ENCODE measurements at regions of chr10 and their contacts with region 1.

Region 1: DNA sequence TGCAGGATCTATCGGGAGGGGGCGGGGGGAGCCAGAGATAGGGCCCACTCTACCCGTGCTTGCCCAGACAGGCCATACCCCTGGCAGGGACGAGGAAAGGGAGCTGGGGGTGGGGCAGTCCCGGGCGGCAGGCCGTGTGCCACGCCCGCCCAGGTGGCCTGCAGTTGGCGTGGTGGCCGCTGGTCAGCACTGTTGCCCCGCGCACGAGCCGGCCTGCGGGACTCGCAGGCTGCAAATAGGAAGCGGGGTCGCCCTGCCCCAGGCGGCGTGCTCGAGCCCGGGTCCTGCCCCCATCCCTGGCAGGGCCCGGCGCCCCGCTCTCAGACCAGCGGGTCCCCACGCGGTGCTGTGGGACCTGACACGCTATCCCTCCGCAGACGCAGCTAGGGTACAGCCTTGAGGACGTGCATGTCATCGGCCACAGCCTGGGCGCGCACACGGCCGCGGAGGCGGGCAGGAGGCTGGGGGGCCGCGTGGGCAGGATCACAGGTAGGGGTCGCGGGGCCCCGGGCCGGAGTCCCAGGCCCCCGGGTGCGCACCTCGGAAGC is 6.7 kb downstream of the PNLIPRP2 start:
- DNase-seq: peak; percentile 31 to 67
- H3K4me3 ChIP-seq: peak overlapping the region; percentile 44 to 75 (median 50)
- H3K27ac ChIP-seq: no peak overlapping the region
- H3K4me1 ChIP-seq: no peaks in the 10 kb centered on the region
- H3K27me3 ChIP-seq: peaks cover 0 to 4% (median 0%) of the 10 kb centered on the region in 4 experiments; a peak in 3 of 7 replicates
- CTCF ChIP-seq: peak; percentile 70 to 93 (median 92)
- EP300 ChIP-seq: no peak
- POLR2A ChIP-seq: no peak
- RAD21 ChIP-seq: peak; percentile 80 to 90

Region 2: GRCh38 chr10:116615199-116615776 is 12.2 kb before region 1 on chr10:
- CTCF ChIA-PET with region 1: interaction called, 13 read pairs
- POLR2A ChIA-PET with region 1: interaction called, 3 read pairs
- DNase-seq: no peak
- H3K4me3 ChIP-seq: no peak overlapping the region
- H3K27ac ChIP-seq: no peak overlapping the region
- H3K4me1 ChIP-seq: no peaks in the 10 kb centered on the region; a peak in 1 of 7 replicates
- H3K27me3 ChIP-seq: peaks cover 0 to 2% (median 0%) of the 10 kb centered on the region in 4 experiments; a peak in 2 of 7 replicates
- CTCF ChIP-seq: no peak
- EP300 ChIP-seq: no peak
- POLR2A ChIP-seq: no peak
- RAD21 ChIP-seq: no peak

Region 3: DNA sequence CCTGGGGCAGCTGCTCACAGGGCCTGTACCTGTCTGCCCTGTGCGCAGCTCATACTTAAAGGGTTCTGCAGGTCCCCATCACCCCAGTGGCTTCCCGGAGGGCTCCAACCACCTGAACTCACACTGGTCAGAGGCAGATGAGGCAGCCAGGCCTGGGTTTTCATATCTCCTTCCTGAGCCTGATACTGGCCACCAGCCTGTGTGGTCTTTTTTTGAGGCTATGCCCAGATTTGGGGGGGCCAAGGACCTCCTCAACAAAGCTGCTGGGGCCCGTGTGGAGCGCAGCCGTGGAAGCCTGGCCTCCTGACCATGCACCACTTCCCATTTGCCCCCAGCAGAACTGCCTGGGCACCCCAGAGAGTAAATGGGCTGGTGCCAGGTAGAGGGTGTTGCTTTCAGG is 19.0 kb after region 1 on chr10:
- CTCF ChIA-PET with region 1: interaction called, 19 read pairs
- POLR2A ChIA-PET with region 1: no interaction called
- DNase-seq: no peak
- H3K4me3 ChIP-seq: no peak overlapping the region
- H3K27ac ChIP-seq: no peak overlapping the region
- H3K4me1 ChIP-seq: no peaks in the 10 kb centered on the region
- H3K27me3 ChIP-seq: no peaks in the 10 kb centered on the region
- CTCF ChIP-seq: no peak
- EP300 ChIP-seq: no peak
- POLR2A ChIP-seq: no peak
- RAD21 ChIP-seq: no peak

Region 4: DNA sequence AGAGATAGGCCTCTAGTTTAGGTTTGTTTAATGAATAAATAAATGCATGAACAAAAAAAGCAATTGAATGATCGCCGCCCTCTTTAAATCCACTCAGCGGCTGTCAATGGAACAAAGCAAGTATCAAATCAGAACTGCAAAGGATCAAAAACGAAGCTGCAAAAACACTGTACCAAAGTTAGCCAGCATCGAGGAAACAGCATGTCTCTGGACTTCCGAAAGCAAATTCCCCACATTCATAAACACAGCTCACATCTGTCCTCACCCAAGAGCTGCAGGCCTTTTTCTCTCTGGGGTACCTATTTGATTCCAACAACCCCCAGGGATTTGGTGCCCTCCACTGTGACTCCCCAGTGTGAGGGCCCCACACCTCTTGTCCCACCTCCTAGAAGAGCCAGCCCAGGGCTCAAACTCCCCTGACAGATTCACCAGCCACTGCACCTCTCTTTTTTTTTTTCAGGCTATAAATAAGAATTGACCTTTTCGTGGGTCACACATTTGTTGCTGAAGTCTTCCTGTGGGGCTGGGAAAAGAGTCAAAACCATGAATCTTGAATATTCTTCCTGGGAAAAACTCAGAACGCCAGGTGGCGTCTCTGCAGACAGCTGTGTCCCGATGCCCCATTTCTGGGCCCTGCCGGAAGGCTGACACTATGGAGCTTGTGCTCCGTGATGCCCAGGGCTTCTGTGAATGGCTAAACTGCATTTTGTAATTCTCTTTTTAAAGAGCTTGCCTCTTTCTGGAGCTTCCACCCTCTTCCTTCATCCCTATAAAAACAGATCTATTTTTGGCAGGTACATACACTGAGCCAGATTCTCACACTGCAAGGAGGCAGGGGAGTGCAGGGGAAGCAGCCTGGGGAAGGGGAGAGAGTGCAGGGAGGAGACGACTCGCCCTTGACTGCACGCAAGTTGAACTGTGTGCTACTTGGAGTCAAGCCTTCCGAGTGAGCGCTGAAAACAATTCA is 63.2 kb after region 1 on chr10:
- CTCF ChIA-PET with region 1: interaction called, 16 read pairs
- POLR2A ChIA-PET with region 1: no interaction called
- DNase-seq: peak in 1 of 2 experiments; percentile 57
- H3K4me3 ChIP-seq: peak overlapping the region in 3 of 4 experiments; percentile 19 to 33 (median 21); a peak in 2 of 8 replicates
- H3K27ac ChIP-seq: no peak overlapping the region
- H3K4me1 ChIP-seq: peaks cover 4 to 17% (median 8%) of the 10 kb centered on the region in 4 experiments; a peak in 6 of 7 replicates
- H3K27me3 ChIP-seq: no peaks in the 10 kb centered on the region; a peak in 3 of 7 replicates
- CTCF ChIP-seq: peak; percentile 45 to 62 (median 46)
- EP300 ChIP-seq: no peak
- POLR2A ChIP-seq: no peak
- RAD21 ChIP-seq: peak; percentile 49 to 60

Region 5: DNA sequence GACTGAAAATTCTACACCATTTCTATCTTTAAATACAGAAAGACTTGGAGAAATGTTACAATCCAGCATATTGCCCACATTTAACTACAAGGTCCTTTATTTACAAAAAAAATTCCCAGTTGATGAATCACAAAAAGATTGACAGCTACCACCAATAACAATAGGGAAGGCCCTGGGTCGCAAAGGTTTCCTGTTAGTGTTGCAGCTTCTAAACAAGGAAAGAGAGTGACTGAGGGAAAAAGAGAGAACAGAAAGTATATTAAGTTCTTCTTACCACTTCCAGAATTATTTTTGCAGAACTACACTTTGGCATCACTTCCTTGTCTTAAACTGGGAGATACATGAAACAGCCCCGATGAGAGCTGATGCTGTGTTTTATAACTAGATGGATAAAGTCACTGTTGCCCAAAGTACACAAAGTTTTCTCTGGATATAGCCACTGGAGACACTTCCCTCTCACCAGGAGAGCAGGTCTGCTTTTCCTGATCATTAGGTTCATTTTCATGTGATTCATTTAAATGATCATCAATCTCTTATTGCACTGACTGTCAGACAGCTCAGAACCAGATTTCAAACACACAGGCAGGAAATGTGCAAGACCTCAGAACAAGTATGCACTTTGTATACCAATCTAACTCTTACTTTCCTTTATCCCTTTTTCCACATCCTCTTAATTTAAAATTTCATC is 320.5 kb after region 1 on chr10:
- CTCF ChIA-PET with region 1: no interaction called
- POLR2A ChIA-PET with region 1: no interaction called
- DNase-seq: no peak
- H3K4me3 ChIP-seq: no peak overlapping the region
- H3K27ac ChIP-seq: 0 out of 2 replicates have a peak overlapping the region, but pooled peaks have one; percentile 11
- H3K4me1 ChIP-seq: peaks cover 0 to 8% (median 5%) of the 10 kb centered on the region in 4 experiments; a peak in 3 of 7 replicates
- H3K27me3 ChIP-seq: no peaks in the 10 kb centered on the region
- CTCF ChIP-seq: no peak
- EP300 ChIP-seq: no peak
- POLR2A ChIP-seq: no peak
- RAD21 ChIP-seq: no peak